T-cell (primary cell): ENCODE measurements at regions of chr7 and their contacts with region 1.

Region 1: GRCh38 chr7:112036071-112036470 is 170.1 kb downstream of the DOCK4 start:
- DNase-seq: no peak
- ATAC-seq: no peak
- H3K4me3 ChIP-seq: no peak overlapping the region
- H3K4me3 Mint-ChIP-seq: no peak overlapping the region
- H3K27ac ChIP-seq: no peak overlapping the region
- H3K27ac Mint-ChIP-seq: no peak overlapping the region
- H3K4me1 ChIP-seq: no peaks in the 10 kb centered on the region
- H3K4me1 Mint-ChIP-seq: no peaks in the 10 kb centered on the region
- H3K27me3 ChIP-seq: no peaks in the 10 kb centered on the region
- H3K27me3 Mint-ChIP-seq: peaks cover 3 to 6% of the 10 kb centered on the region in 2 donors

Region 2: GRCh38 chr7:112020800-112021199 is 15.3 kb before region 1 on chr7:
- CTCF ChIA-PET with region 1: interaction called in 1 of 2 experiments, 10 read pairs
- POLR2A ChIA-PET with region 1: no interaction called
- DNase-seq: no peak
- ATAC-seq: no peak
- H3K4me3 ChIP-seq: no peak overlapping the region
- H3K4me3 Mint-ChIP-seq: no peak overlapping the region
- H3K27ac ChIP-seq: no peak overlapping the region
- H3K27ac Mint-ChIP-seq: no peak overlapping the region
- H3K4me1 ChIP-seq: no peaks in the 10 kb centered on the region
- H3K4me1 Mint-ChIP-seq: no peaks in the 10 kb centered on the region
- H3K27me3 ChIP-seq: no peaks in the 10 kb centered on the region
- H3K27me3 Mint-ChIP-seq: peaks cover 6% of the 10 kb centered on the region in 2 donors